Activated CD4-positive, alpha-beta memory T cell treated with anti-CD3 and anti-CD28 coated beads for 36 hours (primary cell): ENCODE measurements at regions of chr3 and their contacts with region 1.

Region 1: DNA sequence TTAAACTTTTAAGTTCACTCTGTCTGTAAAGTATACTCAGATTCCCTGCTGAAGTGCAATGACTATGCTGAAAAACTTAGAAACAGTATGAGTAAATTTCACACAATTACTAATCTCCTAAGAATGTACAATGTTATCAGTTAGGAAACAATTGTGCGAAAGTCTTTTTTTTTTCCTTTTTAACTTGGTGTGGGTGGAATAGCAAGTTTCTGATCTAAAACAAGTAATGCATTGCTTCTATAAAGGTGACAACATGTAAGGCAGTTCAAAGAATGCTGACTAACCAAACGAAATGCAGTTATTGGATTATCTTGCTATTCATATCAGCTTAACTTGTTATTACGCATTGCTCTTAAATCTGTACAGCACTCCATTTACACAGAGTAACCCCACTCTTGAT is 19.3 kb upstream of the SLC12A8 start:
- DNase-seq: no peak
- H3K4me3 Mint-ChIP-seq: no peak overlapping the region
- H3K27ac Mint-ChIP-seq: peak overlapping the region; percentile 71
- H3K4me1 Mint-ChIP-seq: peaks cover 25% of the 10 kb centered on the region
- H3K27me3 Mint-ChIP-seq: no peaks in the 10 kb centered on the region

Region 2: GRCh38 chr3:125055913-125056745 is 175.8 kb before region 1 on chr3 and contains the start of gene HEG1:
- CTCF ChIA-PET with region 1: no interaction called
- POLR2A ChIA-PET with region 1: no interaction called
- intact Hi-C with region 1: loop called (anchors 10 kb)
- DNase-seq: peak; percentile 83
- H3K4me3 Mint-ChIP-seq: peak within 1 kb of the TSS; percentile 88
- H3K27ac Mint-ChIP-seq: peak within 1 kb of the TSS; percentile 60
- H3K4me1 Mint-ChIP-seq: peaks cover 40% of the 10 kb centered on the region
- H3K27me3 Mint-ChIP-seq: peaks cover 6% of the 10 kb centered on the region
- total RNA-seq, gene HEG1: 6.0 to 7.9 TPM

Region 3: GRCh38 chr3:125141596-125142419 is 90.1 kb before region 1 on chr3:
- CTCF ChIA-PET with region 1: interaction called, 3 read pairs
- POLR2A ChIA-PET with region 1: no interaction called
- intact Hi-C with region 1: loop called (anchors 1 kb)
- DNase-seq: peak; percentile 85
- H3K4me3 Mint-ChIP-seq: peak overlapping the region; percentile 71
- H3K27ac Mint-ChIP-seq: peak overlapping the region; percentile 69
- H3K4me1 Mint-ChIP-seq: peaks cover 35% of the 10 kb centered on the region
- H3K27me3 Mint-ChIP-seq: peaks cover 40% of the 10 kb centered on the region

Region 4: GRCh38 chr3:125202197-125202596 is 29.7 kb before region 1 on chr3:
- CTCF ChIA-PET with region 1: no interaction called
- POLR2A ChIA-PET with region 1: no interaction called
- intact Hi-C with region 1: no loop called
- DNase-seq: peak; percentile 24
- H3K4me3 Mint-ChIP-seq: no peak overlapping the region
- H3K27ac Mint-ChIP-seq: no peak overlapping the region
- H3K4me1 Mint-ChIP-seq: peaks cover 6% of the 10 kb centered on the region
- H3K27me3 Mint-ChIP-seq: peaks cover 12% of the 10 kb centered on the region

Region 5: GRCh38 chr3:125310623-125311081 is 78.8 kb after region 1 on chr3:
- CTCF ChIA-PET with region 1: no interaction called
- POLR2A ChIA-PET with region 1: interaction called, 4 read pairs
- intact Hi-C with region 1: loop called (anchors 5 kb)
- DNase-seq: peak; percentile 72
- H3K4me3 Mint-ChIP-seq: peak overlapping the region; percentile 84
- H3K27ac Mint-ChIP-seq: peak overlapping the region; percentile 81
- H3K4me1 Mint-ChIP-seq: peaks cover 45% of the 10 kb centered on the region
- H3K27me3 Mint-ChIP-seq: no peaks in the 10 kb centered on the region

Region 6: DNA sequence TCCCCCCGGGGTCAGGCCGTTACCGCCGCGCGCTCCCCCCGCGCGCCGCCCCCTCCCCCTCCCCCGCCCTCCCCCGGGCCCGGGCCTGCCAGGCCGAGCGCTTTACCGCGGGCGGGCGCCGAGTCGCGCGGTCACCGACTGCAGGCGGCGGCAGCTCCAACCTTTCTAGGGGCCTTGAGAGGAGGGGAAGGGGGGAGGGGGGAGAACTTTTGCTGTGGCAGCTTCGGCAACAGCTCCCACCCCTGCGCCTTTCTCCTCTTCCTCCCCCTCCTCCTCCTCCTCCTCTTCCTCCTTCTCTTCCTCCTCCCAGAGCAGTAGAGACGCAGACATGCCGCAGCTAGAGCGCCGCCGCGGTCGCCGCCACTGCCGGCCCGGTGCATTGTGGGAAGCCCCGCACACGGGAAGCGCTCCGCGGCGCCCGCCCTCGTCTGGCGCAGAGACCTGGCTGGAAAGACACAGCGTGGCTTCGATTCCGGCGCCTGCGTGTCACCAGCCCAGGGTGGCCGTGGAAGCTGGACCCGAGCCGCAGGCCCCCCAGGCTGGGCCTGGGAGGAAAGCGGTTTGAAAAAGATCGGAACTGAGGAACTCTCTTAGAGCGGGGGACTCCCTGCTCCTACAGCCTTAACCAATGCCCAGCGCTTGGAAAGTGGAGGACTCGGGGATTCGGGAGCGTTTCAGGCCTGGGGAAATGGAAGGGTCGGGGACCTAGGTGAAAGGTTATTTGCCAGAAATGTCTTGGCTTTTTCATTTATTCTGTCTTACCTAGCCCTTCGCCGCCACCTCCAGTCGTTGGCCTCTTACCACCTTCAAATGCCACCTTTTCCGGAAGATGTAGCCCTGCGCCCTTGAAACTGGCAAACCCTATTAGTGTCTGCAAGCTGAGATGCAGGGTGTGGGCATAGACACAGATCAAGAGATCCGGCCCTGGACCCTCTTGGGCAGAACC is 143.4 kb after region 1 on chr3 and contains the start of gene ZNF148:
- CTCF ChIA-PET with region 1: no interaction called
- POLR2A ChIA-PET with region 1: no interaction called
- intact Hi-C with region 1: loop called (anchors 2 kb)
- DNase-seq: peak; percentile 93
- H3K4me3 Mint-ChIP-seq: peak within 1 kb of the TSS; percentile 98
- H3K27ac Mint-ChIP-seq: peak within 1 kb of the TSS; percentile 94
- H3K4me1 Mint-ChIP-seq: peaks cover 36% of the 10 kb centered on the region
- H3K27me3 Mint-ChIP-seq: no peaks in the 10 kb centered on the region
- total RNA-seq, gene ZNF148: 27.9 to 29.9 TPM

Region 7: DNA sequence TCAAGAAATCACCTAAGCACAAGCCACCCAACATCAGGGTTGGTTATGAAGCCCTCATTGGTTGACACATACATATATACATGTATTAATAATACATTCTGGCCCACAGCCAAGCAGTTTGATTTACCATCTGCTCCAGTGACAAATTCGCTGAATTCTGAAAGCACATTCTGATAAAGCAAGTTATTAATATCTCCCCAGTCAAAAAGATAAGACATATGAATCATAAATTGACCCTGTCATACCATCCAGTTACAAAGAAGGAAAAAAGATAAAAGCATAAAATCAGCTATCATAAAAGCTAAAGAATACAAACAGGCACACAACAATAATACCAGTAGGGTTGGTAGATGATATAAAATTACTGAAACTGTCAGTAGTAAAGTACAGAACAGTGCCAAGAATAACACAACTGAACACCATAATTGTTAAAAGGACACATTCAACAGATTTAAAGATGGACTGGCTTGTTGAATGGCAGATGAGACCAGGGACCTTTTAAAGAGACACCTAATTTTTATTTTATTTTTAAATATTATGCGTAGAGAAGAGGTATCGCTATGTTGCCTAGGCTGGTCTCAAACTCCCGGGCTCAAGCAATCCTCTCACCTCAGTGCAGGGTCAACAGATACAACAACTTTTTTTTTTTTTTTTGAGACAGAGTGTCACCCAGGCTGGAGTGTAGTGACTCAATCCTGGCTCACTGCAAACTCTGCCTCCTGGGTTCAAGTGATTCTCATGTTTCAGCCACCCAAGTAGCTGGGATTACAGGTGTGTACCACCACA is 280.4 kb after region 1 on chr3:
- CTCF ChIA-PET with region 1: no interaction called
- POLR2A ChIA-PET with region 1: no interaction called
- intact Hi-C with region 1: loop called (anchors 1 kb)
- DNase-seq: peak; percentile 67
- H3K4me3 Mint-ChIP-seq: no peak overlapping the region
- H3K27ac Mint-ChIP-seq: peak overlapping the region; percentile 83
- H3K4me1 Mint-ChIP-seq: peaks cover 48% of the 10 kb centered on the region
- H3K27me3 Mint-ChIP-seq: no peaks in the 10 kb centered on the region